Lower leg skin (tissue), 4 donors: ENCODE measurements at regions of chr2 and their contacts with region 1.

Region 1: DNA sequence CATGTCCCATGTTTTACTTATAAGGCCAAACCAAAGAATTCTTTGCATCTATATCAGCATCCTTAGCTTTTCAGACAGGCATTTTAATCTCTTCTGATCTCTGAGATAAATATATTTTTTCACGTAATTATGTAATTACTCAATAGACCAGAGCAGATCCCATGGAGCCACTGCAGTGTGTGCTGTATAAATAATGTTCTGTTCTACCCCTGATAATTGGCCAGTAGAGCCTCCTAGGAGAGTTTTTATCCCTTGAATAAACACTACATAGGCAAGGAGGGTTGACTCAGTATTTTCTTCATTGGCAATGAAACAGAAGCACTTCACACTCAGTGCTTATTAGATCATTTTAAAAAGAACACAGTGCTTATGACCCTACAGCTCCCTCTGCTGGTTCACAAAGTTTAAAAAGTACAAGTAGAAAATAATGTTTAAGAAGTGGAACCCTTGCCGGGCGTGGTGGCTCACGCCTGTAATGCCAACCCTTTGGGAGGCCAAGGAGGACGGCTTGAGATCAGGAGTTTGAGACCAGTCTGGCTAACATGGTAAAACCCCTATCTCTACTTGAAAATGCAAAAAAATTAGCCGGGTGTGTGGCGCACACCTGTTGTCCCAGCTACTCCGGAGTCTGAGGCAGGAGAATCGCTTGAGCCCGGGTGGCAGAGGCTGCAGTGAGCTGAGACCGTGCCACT is 91.9 kb downstream of the PPP1R1C start:
- DNase-seq: peak in 1 of 2 donors; percentile 39
- H3K4me3 ChIP-seq: no peak overlapping the region
- CTCF ChIP-seq: no peak
- POLR2A ChIP-seq: no peak

Region 2: DNA sequence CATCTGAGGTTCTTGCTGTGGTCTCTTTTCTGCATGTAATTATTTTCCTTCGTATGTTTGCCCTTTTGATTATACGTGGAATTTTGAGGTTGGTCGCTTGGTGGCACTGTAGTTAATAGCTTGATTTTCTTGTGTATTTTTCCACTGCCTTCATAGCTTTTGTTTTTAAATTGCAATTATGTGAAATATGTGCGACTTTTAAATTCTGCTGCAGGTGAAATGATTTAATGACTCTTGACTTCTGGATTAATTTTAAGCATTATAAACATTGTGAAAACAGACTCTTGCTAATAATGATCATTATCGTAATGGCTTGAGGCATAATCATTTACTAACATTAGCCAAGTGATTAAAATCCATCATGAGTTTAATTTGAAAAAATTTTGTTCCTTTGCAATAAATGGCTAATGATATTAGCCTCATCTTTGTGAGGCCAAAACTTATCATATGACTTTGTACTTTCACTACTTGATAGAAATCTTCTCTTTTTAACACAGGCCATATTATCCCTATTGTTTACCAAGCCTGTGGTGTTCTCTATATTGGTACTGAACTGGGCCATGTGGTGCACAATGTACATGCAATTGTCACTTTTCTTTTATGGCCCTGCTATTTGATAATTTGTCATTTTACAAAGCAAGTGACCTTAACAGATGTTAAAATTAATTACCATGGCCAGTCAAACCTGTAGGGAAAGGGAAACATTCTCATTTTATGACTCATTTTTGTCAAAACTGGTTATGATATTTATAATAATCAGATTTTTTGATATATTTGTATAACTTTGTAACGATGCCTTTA is 334.5 kb before region 1 on chr2:
- intact Hi-C with region 1: loop called (anchors 2 kb)
- DNase-seq: peak in 1 of 2 donors; percentile 19
- H3K4me3 ChIP-seq: no peak overlapping the region
- CTCF ChIP-seq: no peak
- POLR2A ChIP-seq: no peak

Region 3: DNA sequence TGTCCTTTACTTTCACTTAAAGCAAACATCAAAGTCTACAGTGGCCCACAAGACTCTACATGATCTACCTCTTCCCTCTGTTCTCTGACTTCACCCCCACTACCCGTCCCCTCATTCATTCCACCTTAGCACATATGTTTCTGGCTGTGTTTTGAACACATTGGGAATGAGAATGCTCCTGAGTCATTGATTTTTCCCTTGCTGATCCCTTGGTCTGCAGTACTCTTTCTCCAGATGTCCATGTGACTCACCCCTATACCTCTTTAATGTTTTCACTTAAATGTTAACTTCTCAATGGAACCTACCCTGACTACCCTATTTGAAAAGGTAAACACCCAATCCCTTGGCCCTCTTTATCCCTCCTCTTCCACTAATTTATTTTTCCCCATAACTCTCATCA is 819.5 kb after region 1 on chr2:
- intact Hi-C with region 1: no loop called
- DNase-seq: no peak
- H3K4me3 ChIP-seq: no peak overlapping the region
- CTCF ChIP-seq: no peak
- POLR2A ChIP-seq: no peak